CD14-positive monocyte (primary cell): ENCODE measurements at regions of chr6 and their contacts with region 1.

Region 1: DNA sequence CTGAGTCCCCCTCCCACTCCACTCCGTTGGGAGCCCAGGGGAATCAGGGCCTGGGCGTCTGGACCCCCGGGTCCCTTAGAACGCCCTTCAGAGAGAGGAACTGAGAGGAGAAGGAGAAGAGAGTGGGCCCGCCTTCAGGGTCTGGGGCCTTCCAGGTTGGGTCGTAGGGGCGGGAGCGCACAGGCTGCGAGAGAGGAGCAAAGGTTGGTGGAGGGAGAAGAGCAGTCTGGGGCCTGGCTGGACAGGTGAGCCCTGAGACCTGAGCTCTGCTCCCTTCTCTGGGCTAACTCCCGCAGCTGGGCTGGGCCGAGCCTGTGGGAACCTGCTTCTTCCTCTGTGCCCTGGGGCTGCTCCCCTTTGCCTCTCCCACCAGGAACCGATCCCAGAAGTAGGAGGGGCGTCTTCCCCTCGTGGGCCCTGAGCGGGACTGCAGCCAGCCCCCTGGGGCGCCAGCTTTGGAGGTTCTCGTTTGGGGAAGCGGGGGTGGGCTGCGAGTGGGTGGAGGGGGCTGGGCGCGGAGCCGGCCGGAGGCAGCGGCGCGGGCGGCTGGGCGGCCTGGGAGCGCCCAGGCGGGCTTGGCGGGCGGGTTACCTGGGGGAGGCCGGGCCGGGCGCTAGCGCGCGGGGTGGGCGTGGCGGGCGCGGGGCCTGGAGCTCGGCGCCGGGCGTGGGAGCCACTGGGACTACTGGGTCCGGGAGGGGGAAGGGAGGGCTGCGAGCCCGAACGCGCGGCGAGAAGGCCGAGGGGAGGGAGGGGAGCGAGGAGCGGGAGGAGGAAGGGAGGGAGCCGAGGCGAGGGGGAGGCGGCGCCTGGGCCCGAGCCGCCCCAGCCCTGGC is at the start of gene DDR1:
- DNase-seq: peak in 1 of 3 donors; percentile 6
- H3K4me3 ChIP-seq: peak within 1 kb of the TSS; percentile 37 to 75 (median 42)
- H3K4me3 Mint-ChIP-seq: peak within 1 kb of the TSS; percentile 80 to 86
- H3K27ac ChIP-seq: no peak within 1 kb of the TSS
- H3K27ac Mint-ChIP-seq: peak within 1 kb of the TSS in 1 of 7 donors; percentile 74
- H3K4me1 ChIP-seq: peaks cover 9 to 11% of the 10 kb centered on the region in 2 donors
- H3K4me1 Mint-ChIP-seq: peaks cover 23% of the 10 kb centered on the region
- H3K27me3 ChIP-seq: peaks cover 4 to 55% of the 10 kb centered on the region in 2 donors
- H3K27me3 Mint-ChIP-seq: peaks cover 36 to 58% (median 40%) of the 10 kb centered on the region in 3 donors
- CTCF ChIP-seq: no peak
- polyA plus RNA-seq, gene DDR1: 0.39 to 1.0 (median 0.51) TPM

Region 2: GRCh38 chr6:30150671-30151395 is 733.1 kb before region 1 on chr6:
- intact Hi-C with region 1: no loop called
- DNase-seq: no peak
- H3K4me3 ChIP-seq: no peak overlapping the region
- H3K4me3 Mint-ChIP-seq: no peak overlapping the region
- H3K27ac ChIP-seq: no peak overlapping the region
- H3K27ac Mint-ChIP-seq: no peak overlapping the region
- H3K4me1 ChIP-seq: peaks cover 10 to 19% of the 10 kb centered on the region in 2 donors
- H3K4me1 Mint-ChIP-seq: peaks cover 19% of the 10 kb centered on the region
- H3K27me3 ChIP-seq: no peaks in the 10 kb centered on the region
- H3K27me3 Mint-ChIP-seq: peaks cover 0 to 3% (median 2%) of the 10 kb centered on the region in 3 donors
- CTCF ChIP-seq: no peak

Region 3: DNA sequence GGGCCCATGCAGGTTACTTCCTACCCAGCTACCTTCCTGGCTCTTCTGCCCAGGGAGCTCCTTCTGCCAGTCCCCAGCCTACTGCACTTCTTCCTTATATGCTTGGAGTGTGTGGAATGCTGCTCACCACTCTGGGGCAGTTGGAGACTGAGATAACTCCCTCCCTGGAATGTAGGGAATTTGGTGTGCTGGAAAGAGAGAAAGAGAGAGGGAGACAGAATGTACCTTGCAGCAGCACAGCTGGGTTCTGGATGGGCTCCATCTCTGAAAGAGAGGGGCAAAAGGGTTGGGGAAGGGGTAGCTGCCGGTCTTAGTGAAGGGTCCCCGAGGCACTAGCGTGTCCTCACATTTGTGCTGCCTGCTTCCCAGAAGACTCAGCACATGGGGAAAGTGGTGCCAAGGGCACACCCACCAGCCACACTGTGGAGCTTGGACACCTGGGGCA is 39.8 kb before region 1 on chr6:
- intact Hi-C with region 1: loop called in 1 of 2 experiments (anchors 5 kb)
- DNase-seq: no peak
- H3K4me3 ChIP-seq: no peak overlapping the region
- H3K4me3 Mint-ChIP-seq: no peak overlapping the region
- H3K27ac ChIP-seq: no peak overlapping the region
- H3K27ac Mint-ChIP-seq: peak overlapping the region in 1 of 7 donors; percentile 42
- H3K4me1 ChIP-seq: no peaks in the 10 kb centered on the region
- H3K4me1 Mint-ChIP-seq: peaks cover 7% of the 10 kb centered on the region
- H3K27me3 ChIP-seq: no peaks in the 10 kb centered on the region
- H3K27me3 Mint-ChIP-seq: peaks cover 4 to 13% (median 9%) of the 10 kb centered on the region in 3 donors
- CTCF ChIP-seq: no peak

Region 4: GRCh38 chr6:31345026-31345730 is 461.3 kb after region 1 on chr6:
- intact Hi-C with region 1: no loop called
- DNase-seq: no peak
- H3K4me3 ChIP-seq: no peak overlapping the region
- H3K4me3 Mint-ChIP-seq: no peak overlapping the region
- H3K27ac ChIP-seq: no peak overlapping the region
- H3K27ac Mint-ChIP-seq: no peak overlapping the region
- H3K4me1 ChIP-seq: no peaks in the 10 kb centered on the region
- H3K4me1 Mint-ChIP-seq: no peaks in the 10 kb centered on the region
- H3K27me3 ChIP-seq: no peaks in the 10 kb centered on the region
- H3K27me3 Mint-ChIP-seq: peaks cover 0 to 8% (median 2%) of the 10 kb centered on the region in 3 donors
- CTCF ChIP-seq: no peak